PC-9 (cell line): ENCODE measurements at regions of chr1 and their contacts with region 1.

Region 1: GRCh38 chr1:205300886-205301821 is 20.4 kb downstream of the NUAK2 start:
- DNase-seq: peak; percentile 78 to 85
- H3K4me3 ChIP-seq: peak overlapping the region; percentile 15; the same call in 1 of the 2 replicates
- H3K27ac ChIP-seq: peak overlapping the region; percentile 68
- H3K4me1 ChIP-seq: peaks cover 53% of the 10 kb centered on the region
- H3K27me3 ChIP-seq: no peaks in the 10 kb centered on the region
- CTCF ChIP-seq: no peak

Region 2: DNA sequence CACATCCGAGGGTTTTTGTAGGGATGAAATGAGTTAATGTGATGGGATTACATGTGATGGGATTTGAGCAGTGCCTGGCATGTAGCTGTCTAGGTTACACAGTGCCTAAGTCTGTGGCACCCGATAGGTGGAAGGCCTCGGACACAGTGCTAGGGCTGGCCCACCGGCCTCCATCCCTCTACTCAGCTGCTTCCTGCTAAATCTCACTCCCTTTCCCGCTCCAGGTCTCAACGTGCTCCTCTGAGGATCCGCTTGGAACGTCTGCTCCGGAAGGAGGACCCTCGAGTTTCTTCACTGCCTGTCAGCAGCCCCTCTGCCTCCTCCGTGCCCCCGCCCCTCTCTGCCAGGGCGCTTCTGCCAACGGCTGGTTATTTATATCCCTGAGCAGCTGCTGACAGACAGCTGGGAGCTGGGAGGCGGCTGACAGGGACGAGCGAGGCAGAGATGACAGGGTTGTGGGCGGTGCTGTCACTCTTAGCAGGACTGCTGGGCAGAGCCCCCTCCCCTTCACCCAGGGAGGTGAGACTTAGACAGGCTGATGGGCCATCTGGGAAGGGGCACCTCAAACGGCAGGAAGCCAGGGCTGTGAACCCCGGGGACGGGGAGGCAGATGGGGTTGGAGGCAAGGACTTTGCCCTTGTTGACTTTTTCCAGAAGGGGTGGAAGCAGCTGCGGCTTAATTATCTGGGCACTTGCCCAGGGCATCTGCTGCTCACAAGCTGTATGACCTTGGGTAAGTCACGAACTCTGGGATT is 589.0 kb before region 1 on chr1:
- CTCF ChIA-PET with region 1: no interaction called
- POLR2A ChIA-PET with region 1: interaction called, 10 read pairs
- intact Hi-C with region 1: no loop called
- DNase-seq: no peak
- H3K4me3 ChIP-seq: no peak overlapping the region
- H3K27ac ChIP-seq: no peak overlapping the region
- H3K4me1 ChIP-seq: peaks cover 9% of the 10 kb centered on the region
- H3K27me3 ChIP-seq: peaks cover 5% of the 10 kb centered on the region; the same call in 1 of the 2 replicates
- CTCF ChIP-seq: no peak

Region 3: DNA sequence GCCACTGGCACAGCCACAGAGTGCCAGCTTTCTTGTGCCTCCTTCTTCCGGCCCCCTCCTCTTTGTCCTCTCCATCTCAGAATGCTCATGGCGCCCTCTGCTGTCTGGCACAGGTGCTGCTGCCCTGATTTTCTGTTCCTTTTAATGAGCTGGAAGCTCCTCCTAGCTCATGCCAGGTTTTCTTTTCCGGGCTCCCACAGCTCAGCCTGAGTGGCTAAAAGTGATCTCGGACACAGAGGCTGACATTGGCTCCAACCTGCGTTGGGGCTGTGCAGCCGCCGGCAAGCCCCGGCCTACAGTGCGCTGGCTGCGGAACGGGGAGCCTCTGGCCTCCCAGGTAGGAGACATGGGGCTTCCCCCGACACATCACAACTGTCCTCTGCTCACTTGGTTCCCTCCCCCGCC is 239.5 kb before region 1 on chr1:
- CTCF ChIA-PET with region 1: no interaction called
- POLR2A ChIA-PET with region 1: no interaction called
- intact Hi-C with region 1: no loop called
- DNase-seq: peak; percentile 37 to 77
- H3K4me3 ChIP-seq: no peak overlapping the region
- H3K27ac ChIP-seq: no peak overlapping the region
- H3K4me1 ChIP-seq: no peaks in the 10 kb centered on the region
- H3K27me3 ChIP-seq: peaks cover 84% of the 10 kb centered on the region
- CTCF ChIP-seq: peak; percentile 91

Region 4: GRCh38 chr1:205284343-205285144 is 16.6 kb before region 1 on chr1:
- CTCF ChIA-PET with region 1: interaction called, 4 read pairs
- POLR2A ChIA-PET with region 1: interaction called, 5 read pairs
- intact Hi-C with region 1: loop called (anchors 1 kb)
- DNase-seq: peak; percentile 94 to 96
- H3K4me3 ChIP-seq: no peak overlapping the region
- H3K27ac ChIP-seq: 0 out of 2 replicates have a peak overlapping the region, but pooled peaks have one; percentile 24
- H3K4me1 ChIP-seq: peaks cover 25% of the 10 kb centered on the region
- H3K27me3 ChIP-seq: no peaks in the 10 kb centered on the region
- CTCF ChIP-seq: no peak

Region 5: GRCh38 chr1:205321164-205321958 is 20.2 kb after region 1 on chr1 and contains the start of gene NUAK2:
- CTCF ChIA-PET with region 1: interaction called, 12 read pairs
- POLR2A ChIA-PET with region 1: no interaction called
- intact Hi-C with region 1: loop called (anchors 1 kb)
- DNase-seq: peak; percentile 71 to 91
- H3K4me3 ChIP-seq: peak within 1 kb of the TSS; percentile 94
- H3K27ac ChIP-seq: no peak within 1 kb of the TSS
- H3K4me1 ChIP-seq: peaks cover 56% of the 10 kb centered on the region
- H3K27me3 ChIP-seq: 0 out of 2 replicates have a peak, but pooled peaks cover 2% of the 10 kb centered on the region
- CTCF ChIP-seq: peak; percentile 50; the same call in 1 of the 2 replicates
- total RNA-seq, gene NUAK2: 3.8 and 3.9 TPM in 2 replicates